Right ventricle myocardium inferior (tissue), 1 donor: ENCODE measurements at regions of chr4 and their contacts with region 1.

Region 1: DNA sequence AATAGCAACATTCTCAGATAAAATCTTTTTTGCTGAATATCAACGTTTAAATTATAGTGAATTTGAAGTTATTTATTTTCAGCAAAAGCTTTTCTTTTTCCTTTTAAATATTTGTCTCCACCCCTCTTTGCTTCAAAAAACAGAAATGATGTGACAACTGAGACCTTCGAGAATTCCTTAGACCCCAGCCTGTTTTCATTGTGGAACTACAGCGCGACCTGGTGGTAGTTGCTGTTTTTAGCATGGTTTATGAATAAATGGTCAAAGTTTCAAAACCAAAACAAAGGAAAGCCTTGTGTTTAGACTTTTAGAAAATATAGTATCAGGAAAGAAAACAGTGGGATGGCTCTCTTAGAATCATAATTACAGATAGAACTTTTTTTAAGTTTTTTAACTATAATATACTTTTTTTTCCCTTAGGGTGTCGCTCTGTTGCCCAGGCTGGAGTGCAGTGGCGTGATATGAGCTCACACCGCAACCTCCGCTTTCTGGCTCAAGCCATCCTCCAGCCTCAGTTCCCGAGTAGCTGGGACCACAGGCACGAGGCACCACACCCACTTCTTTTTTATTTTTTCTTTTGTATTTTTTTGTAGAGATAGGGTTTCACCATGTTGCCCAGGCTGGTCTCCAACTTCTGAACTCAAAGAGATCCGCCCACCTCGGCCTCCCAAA is 26.8 kb upstream of the TMEM184C start:
- DNase-seq: no peak
- ATAC-seq: no peak

Region 2: DNA sequence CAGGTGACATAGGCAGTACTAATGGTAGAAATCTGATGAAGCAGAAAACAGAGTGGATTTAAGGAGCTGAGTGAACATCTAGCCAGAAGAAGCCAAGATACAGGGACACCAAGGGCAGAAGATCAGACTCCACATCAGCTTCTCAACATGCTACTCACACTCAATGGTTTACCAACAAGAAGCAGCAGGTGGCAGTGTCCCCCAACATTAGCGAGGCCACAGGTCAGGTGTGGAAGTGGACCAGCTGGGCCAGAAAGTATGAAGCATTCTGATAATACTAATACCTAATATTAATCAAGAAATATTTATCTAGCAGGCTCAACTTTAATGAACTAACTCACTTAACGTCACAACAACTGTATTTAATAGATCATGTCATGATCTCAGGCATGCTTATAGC is 571.3 kb before region 1 on chr4:
- intact Hi-C with region 1: loop called (anchors 5 kb)
- DNase-seq: peak; percentile 66
- ATAC-seq: peak; percentile 84

Region 3: DNA sequence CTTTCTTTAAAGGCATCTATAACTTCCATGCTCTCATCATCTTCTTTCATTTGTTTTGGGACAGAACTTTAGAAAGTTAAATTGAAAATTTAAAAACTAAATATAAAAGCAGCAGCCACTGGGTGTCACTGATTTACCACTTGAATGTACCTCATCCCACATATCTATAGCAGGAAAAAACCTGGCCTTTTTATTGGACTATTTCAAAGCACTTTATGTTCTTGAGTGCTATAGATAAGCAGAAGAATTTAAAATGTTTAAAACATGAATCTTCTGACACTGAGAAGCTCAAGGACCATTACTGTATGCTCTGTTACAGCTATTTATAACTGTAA is 479.4 kb before region 1 on chr4:
- intact Hi-C with region 1: loop called (anchors 2 kb)
- DNase-seq: no peak
- ATAC-seq: no peak

Region 4: DNA sequence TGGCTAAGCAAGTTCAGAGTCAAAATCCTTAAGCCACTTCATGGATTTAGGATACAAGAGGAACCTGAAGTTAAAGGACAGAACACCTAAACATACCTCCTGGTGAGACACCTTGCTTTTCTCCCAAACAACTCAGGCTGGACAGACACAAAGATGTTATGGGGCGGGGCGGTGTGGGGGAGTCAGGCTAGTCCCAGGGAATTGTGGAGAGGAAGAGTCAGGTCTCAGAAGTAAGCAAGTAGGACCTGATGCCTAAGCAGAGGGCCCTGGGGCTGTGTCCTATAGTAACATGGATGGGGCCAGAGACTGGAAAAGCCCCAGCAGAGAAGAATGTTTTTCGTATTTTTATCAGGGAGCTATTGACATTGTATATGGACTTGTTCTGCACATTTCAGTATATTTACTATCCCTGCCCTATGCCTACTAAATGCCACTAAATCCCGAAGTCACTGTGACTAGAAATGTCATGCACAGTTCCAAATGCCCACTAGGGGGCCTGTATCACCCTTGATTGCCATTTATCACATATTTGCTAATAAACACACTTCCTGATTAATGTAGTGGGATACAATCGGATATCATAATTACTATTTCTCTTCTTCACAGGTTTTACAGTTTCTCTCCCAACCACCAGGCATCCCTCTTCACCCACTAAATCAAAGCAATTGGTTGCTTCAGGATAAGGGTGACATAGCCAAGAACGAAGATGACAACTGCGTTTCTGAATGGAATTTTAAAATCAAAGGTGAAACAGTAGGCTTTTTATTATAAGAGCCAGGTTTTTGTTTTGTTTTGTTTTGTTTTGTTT is 117.7 kb after region 1 on chr4:
- intact Hi-C with region 1: no loop called
- DNase-seq: no peak
- ATAC-seq: peak; percentile 78